ENCODE measurements at regions of chr5 and their contacts with region 1.

Region 1: DNA sequence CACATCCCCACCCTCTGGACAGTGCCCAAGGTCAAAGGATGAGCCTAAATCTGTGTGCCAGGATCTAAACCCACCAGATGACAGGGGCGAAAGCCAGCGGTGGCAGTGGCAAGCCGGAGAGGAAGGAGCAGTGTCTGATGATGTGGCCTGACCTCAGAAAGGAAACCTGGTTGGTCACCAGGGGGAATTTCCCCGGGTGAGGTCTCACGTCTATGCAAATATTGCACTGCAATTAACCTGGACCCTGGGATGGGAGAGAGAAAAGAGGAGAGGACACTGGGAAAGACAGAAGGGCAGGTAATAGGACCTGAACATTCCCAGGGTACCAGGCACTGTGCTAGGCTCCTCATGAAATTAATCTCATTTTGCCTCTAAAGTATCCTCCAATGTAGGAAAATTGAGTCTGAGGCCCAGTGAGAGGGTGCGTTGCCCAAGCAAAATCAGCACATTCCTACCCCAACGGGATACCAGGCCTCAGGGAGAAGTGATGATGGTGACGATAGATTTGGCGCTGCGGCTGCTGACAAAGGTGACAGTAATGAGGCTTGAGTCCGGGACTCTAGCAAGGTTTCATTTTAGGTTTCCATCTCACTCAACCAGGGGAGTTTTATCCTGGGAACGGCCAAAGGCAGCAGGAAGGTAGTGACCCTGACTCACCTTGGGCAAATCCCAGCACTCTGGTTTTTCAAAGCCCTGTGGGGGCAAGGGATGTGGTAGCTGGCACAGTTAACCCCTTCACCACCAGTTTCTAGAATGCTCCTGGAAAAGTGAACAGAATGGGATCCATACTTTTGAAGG is 13.4 kb upstream of the TNIP1 start:
- DNase-seq: peak; percentile 79
- ATAC-seq: peak; percentile 76
- H3K4me3 ChIP-seq: peak overlapping the region in 2 of 5 experiments; percentile 2 to 22
- H3K4me3 Mint-ChIP-seq: peak overlapping the region; percentile 82
- H3K27ac ChIP-seq: peak overlapping the region; percentile 26 to 76
- H3K27ac Mint-ChIP-seq: peak overlapping the region; percentile 68
- H3K4me1 ChIP-seq: peaks cover 55 to 62% of the 10 kb centered on the region in 2 donors
- H3K4me1 Mint-ChIP-seq: peaks cover 68% of the 10 kb centered on the region
- H3K27me3 ChIP-seq: no peaks in the 10 kb centered on the region
- H3K27me3 Mint-ChIP-seq: no peaks in the 10 kb centered on the region
- CTCF ChIP-seq: no peak

Region 2: DNA sequence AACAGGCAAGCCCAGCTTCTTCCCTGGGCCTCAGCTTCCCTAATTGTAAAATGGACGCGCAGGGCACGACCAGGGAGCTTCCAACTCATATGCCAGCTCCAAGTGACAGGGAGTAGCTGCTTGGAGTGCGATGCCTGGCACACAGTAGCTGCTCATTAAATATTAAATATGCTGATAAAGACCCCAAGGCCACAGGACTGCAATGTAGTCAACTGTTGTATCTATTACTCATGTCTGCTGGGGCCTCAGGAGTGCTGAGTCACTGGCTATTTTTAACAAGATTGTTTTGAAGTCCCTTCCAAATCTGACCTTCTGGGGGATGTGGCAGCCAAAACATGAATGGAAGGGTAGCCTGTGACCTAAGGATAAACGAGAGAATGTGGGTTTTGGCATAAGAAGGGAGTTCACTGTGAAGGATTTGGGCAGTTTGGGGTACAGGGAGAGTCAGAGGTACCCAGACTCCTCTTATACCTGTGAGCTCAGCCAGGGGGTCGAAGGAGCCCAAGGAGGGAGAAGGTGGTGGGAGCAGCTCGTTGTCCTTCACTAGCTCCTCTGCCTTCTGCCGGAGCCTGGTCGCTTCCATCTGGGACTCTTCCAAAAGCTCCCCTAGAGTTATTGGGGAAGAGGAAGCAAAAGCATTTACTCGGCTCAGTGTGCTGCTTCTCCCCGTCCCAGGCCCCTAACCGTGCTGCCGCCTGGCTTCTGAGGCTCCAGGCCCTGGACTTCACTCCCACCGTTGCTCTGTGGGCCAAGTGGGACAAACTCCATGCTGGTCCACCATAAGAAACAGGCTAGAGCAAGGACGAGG is 30.9 kb before region 1 on chr5:
- CTCF ChIA-PET with region 1: interaction called, 4 read pairs
- POLR2A ChIA-PET with region 1: interaction called, 5 read pairs
- intact Hi-C with region 1: loop called (anchors 1 kb)
- DNase-seq: no peak
- ATAC-seq: no peak
- H3K4me3 ChIP-seq: no peak overlapping the region
- H3K4me3 Mint-ChIP-seq: no peak overlapping the region
- H3K27ac ChIP-seq: no peak overlapping the region
- H3K27ac Mint-ChIP-seq: peak overlapping the region; percentile 72
- H3K4me1 ChIP-seq: peaks cover 44 to 54% of the 10 kb centered on the region in 2 donors
- H3K4me1 Mint-ChIP-seq: peaks cover 69% of the 10 kb centered on the region
- H3K27me3 ChIP-seq: no peaks in the 10 kb centered on the region
- H3K27me3 Mint-ChIP-seq: no peaks in the 10 kb centered on the region
- CTCF ChIP-seq: no peak

Region 3: DNA sequence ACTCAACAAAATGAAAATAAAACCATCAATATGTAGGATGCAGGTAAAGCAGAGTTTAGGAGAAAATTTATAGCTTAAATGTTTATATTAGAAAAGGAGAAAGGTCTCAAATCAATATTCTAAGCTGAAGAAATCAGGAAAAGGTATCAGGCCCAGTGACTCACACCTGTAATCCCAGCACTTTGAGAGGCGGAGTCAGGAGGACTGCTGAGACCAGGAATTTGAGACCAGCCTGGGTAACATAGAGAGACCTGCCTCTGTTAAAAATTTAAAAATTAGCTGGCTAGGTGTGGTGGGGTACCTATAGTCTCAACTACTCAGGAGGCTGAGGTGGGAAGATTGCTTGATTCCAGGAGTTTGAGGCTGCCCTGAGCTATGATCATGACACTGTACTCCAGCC is 97.4 kb after region 1 on chr5:
- CTCF ChIA-PET with region 1: no interaction called
- POLR2A ChIA-PET with region 1: interaction called, 11 read pairs
- intact Hi-C with region 1: no loop called
- DNase-seq: no peak
- ATAC-seq: no peak
- H3K4me3 ChIP-seq: peak overlapping the region in 1 of 5 experiments; percentile 8
- H3K4me3 Mint-ChIP-seq: peak overlapping the region; percentile 16
- H3K27ac ChIP-seq: peak overlapping the region; percentile 19 to 78
- H3K27ac Mint-ChIP-seq: peak overlapping the region; percentile 6
- H3K4me1 ChIP-seq: peaks cover 47 to 67% of the 10 kb centered on the region in 2 donors
- H3K4me1 Mint-ChIP-seq: peaks cover 76% of the 10 kb centered on the region
- H3K27me3 ChIP-seq: no peaks in the 10 kb centered on the region
- H3K27me3 Mint-ChIP-seq: no peaks in the 10 kb centered on the region
- CTCF ChIP-seq: no peak

Measured in B cell (primary cell).